ENCODE measurements at regions of chr1 and their contacts with region 1.

Region 1: DNA sequence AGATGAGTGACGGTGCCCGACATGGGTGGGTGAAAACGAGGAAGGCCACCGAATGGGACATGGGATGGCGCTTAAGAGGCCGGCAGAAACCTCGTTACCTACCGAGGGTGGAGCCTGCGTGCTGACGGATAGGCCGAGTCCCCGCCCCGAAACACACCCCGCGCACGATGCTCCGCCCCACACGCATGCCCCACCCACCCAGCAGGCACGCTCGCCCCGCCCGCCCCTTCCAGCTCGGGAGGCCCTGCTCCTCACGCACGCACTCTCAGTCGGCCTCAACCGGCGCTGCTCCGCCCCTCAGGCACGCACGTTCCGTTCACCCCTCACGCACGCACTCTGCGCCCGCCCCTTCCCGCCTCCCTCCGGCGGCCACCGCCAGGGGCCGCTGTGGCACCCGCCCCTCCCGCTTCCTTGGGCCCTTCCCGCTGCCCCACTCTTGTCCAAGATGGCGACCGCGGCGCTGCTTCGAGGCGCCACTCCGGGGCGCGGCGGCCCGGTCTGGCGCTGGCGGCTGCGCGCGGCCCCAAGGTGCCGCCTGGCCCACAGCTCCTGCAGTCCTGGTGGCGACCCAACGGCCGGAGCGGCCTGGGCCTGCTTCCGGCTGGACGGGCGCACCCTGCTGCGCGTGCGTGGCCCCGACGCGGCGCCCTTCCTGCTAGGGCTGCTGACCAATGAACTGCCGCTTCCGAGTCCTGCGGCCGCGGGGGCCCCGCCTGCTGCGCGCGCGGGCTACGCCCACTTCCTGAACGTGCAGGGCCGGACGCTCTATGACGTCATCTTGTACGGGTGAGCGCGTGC is at the start of gene IBA57:
- DNase-seq: peak; percentile 99
- total RNA-seq, gene IBA57: 16.6 TPM

Region 2: DNA sequence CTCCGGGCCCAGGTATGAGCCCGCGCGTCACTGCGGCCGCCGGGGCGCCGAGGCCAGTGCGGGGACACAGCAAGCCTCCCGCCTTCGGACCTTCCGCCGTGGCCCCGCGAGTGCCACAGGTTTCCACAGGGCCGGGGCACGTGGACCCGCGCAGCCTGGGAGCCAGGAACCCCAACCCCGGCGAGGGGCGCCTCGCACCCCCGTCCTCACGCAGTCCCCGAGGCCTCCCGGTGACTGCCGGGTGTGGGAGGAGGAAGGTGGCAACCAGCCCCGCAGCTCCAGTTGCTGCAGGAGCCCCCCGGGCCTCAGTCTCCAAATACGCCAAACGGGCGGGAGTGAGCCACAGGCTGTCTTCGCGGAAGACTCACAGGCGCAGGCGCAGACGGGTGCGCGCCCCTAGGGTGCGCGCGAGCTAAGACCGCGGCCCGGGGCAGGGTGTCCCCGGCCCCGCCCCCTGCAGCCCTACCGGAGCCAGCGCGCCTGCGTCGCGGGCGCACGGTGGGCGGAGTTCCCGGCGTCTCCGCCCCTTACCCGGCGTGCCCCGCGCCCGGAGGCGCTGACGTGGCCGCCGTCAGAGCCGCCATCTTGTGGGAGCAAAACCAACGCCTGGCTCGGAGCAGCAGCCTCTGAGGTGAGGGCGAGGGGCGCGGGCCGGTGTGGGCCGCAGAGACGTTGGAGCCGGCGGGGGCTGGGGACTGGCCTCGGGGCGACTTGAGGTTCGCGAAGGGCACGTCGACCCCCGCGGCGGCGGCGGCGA is 83.3 kb before region 1 on chr1 and contains the start of gene ARF1:
- intact Hi-C with region 1: loop called (anchors 2 kb)
- DNase-seq: peak; percentile 97
- total RNA-seq, gene ARF1: 332 TPM

Region 3: DNA sequence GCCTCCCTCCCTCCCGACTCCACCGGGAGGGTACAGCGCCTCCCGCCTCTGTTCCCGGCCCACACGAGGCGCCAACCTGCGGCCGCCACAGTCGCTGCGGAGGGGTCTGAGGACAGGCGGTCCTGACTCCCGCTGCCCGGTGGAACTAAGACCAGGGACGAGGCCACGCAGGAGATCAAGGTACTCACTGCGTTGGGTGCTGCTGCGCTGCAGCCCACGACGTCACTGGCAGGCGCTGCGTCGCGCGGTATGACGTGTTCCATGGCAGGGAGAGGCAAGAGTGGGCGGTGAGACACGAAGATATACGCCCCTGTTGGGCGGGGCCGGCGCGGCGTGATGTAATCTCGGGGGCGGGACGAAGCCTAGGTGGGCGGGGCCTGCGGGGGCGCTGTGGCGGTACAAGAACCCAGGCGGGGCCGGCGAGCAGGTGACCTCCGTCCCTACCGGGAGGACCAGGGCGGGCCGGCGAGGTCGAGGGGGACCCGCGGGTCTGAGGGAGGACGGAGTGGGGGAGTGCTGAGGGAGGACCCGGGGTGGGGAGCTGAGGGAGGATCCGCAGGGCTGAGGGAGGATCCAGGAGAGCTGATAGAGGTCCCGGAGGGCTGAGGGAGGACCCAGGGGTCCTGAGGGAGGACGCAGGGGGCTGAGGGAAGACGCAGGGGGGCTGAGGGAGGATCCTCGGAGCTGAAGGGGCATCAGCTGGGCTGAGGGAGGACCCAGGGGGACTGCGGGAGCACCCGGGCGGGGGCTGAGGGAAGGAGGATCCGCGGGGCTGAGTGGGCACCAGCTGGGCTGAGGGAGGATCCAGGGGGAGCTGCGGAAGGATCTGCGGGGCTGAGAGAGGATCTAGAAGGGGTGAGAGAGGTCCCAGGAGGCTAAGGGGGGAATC is 56.3 kb before region 1 on chr1 and contains the start of gene MRPL55:
- intact Hi-C with region 1: loop called (anchors 2 kb)
- DNase-seq: peak; percentile 100
- total RNA-seq, gene MRPL55: 39.7 TPM

Region 4: DNA sequence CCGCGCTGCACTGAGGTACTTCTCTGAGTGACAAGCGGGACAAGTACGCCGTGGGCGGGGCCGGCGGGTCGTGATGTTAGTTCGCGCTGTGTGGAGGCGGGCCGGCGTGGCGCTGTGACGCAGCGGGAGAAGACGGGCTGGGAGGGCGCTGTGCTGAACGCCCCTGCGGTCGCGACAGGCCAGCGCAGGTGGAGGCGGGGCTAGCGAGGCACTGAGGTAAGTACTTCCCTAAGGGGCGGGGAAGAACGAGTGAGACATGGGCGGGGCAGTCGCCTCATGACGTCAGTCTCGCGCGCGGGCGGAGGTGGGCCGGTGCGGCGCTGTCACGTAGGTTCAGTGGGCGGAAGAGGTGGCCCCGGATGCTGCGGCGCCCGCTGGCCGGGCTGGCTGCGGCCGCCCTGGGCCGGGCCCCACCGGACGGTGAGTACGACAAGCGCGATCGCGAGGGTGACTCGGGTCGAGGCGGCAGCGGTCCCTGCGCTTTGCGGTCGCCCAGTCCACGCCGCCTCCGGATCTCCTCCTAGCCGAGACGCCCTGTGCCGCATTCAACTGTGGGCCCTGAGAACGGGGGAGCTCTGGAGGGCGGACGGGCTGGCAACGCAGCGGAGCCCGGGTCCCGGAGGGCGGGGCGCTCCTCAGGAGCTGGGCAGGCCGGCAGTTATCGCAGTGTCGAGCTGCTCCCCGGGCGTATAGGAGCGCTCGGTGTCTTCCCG is 25.5 kb before region 1 on chr1 and contains the start of gene GUK1:
- intact Hi-C with region 1: loop called (anchors 1 kb)
- DNase-seq: peak; percentile 100
- total RNA-seq, gene GUK1: 213 TPM

Region 5: DNA sequence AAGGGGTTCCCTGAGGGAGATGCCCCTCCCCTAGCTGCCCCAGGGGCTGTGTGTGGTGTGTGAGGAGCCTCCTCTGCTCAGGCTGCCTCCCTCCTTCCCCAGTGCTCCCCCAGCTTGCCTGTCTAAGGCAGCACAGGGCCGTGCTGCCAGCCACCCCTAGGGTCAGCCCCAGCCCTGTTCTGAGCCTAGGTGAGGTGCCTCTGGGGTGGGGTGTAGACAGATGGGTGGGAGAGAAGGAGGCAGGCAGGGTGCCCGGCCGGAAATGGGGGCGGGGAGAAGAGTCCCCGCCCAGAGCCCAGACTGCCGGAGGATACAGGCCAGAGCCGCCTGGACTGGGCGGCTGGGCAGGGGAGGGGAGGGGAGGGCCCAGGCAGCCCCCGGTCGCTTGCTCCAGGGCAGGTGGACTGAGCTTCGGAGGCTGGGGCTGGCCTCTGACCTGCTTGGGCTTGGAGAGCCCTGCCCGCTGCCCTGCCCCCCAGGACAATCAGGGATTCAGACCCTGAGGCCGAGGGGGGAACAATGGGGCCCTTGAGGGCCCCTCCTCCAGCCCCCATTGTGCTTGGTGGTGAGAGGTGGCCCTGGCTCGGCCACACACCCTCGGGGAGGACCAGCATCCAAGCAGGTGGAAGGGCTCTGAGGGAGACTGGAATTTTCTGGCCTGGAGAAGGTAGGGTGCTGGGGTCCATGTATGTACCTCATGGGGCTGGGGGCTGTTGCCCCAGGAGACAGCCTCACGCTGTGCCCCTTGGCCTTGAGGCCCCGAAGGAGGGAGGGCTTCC is 16.0 kb before region 1 on chr1 and contains the start of gene GJC2:
- intact Hi-C with region 1: loop called (anchors 2 kb)
- DNase-seq: peak; percentile 78
- total RNA-seq, gene GJC2: 1.6 TPM

Region 6: GRCh38 chr1:228210076-228210651 is 44.6 kb after region 1 on chr1:
- intact Hi-C with region 1: loop called (anchors 2 kb)
- DNase-seq: no peak